ENCODE measurements at regions of chr1 and their contacts with region 1.

Region 1: DNA sequence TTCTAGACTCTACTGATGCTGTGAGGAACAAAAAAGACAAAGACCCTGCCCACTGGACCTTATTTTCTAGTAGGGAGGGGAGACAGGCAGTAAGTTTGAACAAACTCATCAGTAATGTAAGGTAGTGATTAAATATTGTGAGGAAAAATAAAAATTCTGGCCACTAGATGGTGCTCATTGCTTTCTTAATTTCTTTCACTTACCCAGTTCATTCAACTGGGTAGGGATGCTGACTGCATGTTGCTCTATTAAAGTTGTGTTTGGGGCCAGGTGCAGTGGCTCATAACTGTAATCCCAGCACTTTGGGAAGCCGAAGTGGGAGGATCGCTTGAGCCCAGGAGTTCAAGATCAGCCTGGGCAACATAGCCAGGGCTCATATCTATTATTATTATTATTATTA is 6.3 kb upstream of the KYAT3 start:
- DNase-seq: no peak
- H3K4me3 ChIP-seq: no peak overlapping the region
- H3K27ac ChIP-seq: peak overlapping the region in 1 of 59 donors; percentile 1
- H3K27me3 ChIP-seq: no peaks in the 10 kb centered on the region
- CTCF ChIP-seq: peak; percentile 57 to 92 (median 76)

Region 2: GRCh38 chr1:88371396-88371795 is 627.3 kb before region 1 on chr1:
- intact Hi-C with region 1: no loop called
- DNase-seq: no peak
- H3K4me3 ChIP-seq: no peak overlapping the region
- H3K27ac ChIP-seq: no peak overlapping the region
- H3K27me3 ChIP-seq: no peaks in the 10 kb centered on the region
- CTCF ChIP-seq: no peak

Region 3: GRCh38 chr1:89151047-89151446 is 152.3 kb after region 1 on chr1:
- intact Hi-C with region 1: loop called in 1 of 2 experiments (anchors 10 kb)
- DNase-seq: no peak
- H3K4me3 ChIP-seq: no peak overlapping the region
- H3K27ac ChIP-seq: no peak overlapping the region
- H3K27me3 ChIP-seq: no peaks in the 10 kb centered on the region
- CTCF ChIP-seq: no peak

Region 4: DNA sequence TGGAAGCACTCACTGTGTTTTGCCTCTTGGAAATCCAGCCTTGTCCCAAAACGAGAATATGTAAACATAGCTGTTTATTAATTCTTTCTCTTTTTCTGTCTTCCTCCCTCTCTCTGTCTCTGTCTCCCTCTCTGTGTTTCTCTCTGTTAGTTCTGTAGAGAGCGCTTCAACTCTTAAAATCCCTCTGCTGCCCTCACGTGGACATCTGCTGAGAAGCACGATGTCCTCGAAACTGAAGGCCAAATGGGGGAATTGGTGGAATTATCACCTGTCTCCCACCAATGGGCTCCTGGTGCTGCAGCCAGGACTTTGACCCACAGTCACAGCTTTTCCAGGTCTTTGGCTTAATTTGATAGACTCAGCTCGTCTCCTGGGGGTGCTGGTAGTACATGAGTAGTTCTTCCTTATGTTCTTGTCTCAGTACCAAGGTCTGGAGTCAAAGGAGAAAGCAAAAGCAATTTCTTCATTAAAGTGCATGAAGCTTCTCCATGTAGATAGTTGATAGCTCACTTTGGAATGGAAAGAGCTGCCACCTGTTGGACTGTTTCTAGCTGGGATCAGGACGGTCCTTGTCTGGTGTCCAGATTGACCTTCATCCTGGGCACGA is 359.7 kb after region 1 on chr1:
- intact Hi-C with region 1: loop called (anchors 1 to 5 kb)
- DNase-seq: peak; percentile 35 to 76 (median 58)
- H3K4me3 ChIP-seq: no peak overlapping the region
- H3K27ac ChIP-seq: peak overlapping the region in 1 of 59 donors; percentile 12
- H3K27me3 ChIP-seq: no peaks in the 10 kb centered on the region
- CTCF ChIP-seq: peak; percentile 37 to 90 (median 79)

Region 5: DNA sequence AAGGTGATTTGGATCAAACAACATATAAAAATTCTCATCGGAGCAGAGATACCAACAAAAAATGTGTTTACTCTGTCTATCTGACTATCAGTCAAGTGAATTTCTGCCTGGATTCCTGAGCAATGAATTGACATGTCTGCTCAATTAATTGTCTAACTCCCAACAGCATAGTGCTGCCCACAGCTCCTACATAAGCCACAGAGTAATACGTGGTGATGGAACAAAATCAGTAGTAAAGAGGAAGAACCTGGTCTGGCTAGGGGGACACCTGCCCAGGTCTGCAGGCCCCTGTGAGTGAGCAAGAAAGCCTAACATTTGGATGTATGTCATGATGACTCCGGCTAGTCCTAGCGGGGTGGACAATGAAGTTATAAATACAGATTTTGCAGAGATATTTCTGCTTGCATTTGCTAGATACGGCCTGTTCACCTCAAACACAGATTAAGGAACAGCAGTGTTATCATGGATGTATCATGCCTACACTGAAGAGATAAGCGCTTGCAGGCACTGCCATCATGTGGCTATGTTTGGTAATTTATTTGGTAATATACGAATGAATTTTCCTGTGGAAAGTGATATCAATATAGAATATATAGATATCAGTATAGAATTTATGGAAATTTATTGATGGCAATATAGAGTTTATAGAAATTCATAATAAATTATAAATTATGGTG is 456.3 kb after region 1 on chr1:
- intact Hi-C with region 1: loop called (anchors 5 kb)
- DNase-seq: peak in 6 of 10 donors; percentile 15 to 62 (median 42)
- H3K4me3 ChIP-seq: no peak overlapping the region
- H3K27ac ChIP-seq: no peak overlapping the region
- H3K27me3 ChIP-seq: no peaks in the 10 kb centered on the region
- CTCF ChIP-seq: peak in 55 of 56 donors; percentile 57 to 89 (median 74)

Measured in dorsolateral prefrontal cortex (tissue), 120 donors.